ENCODE measurements at regions of chr7 and their contacts with region 1.

Region 1: DNA sequence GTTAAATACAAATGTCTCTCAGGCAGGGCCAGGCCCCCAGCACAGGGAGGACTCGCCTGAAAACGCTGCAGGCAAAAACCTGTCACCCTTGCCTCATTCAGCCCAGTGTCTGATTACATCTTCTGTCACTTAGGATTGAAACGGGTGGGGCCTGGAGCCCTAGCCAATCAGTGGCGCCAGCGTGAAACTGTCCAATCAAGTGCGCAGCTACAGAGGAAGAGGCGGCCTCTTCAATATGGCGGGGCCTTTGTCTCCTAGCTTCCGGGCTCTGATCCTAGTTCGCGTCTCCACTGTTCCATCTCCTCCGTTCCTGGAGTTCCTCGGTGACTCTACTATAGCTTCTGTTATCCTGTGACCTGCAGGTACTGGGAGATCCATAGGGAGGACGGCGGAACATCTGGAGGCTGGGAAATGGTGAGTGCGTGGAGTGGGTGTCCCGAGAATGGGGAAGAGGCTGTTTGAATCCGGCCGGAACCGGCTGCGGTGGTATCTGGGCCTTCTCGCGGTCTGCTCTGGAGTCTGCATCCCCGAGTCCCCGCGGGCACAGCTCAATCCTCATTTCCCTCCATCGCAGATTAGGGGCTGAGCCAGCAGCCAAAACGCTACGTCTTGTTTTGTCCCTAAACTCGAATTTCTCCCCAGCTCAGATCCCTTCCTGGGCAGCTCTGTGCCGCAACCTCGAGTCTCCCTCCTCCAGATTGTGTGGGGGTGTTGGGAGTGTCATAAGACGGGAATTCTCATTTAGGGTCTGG is at the start of gene ZNF736:
- DNase-seq: peak; percentile 95
- H3K4me3 ChIP-seq: peak within 1 kb of the TSS; percentile 54 to 79 (median 74)
- H3K27ac ChIP-seq: peak within 1 kb of the TSS; percentile 67 to 79 (median 72)
- H3K4me1 ChIP-seq: peaks cover 0 to 22% (median 17%) of the 10 kb centered on the region in 4 donors
- H3K27me3 ChIP-seq: no peaks in the 10 kb centered on the region
- CTCF ChIP-seq: no peak
- EP300 ChIP-seq: no peak
- POLR2A ChIP-seq: no peak
- total RNA-seq, gene ZNF736: 4.1 to 22.4 (median 7.5) TPM

Region 2: DNA sequence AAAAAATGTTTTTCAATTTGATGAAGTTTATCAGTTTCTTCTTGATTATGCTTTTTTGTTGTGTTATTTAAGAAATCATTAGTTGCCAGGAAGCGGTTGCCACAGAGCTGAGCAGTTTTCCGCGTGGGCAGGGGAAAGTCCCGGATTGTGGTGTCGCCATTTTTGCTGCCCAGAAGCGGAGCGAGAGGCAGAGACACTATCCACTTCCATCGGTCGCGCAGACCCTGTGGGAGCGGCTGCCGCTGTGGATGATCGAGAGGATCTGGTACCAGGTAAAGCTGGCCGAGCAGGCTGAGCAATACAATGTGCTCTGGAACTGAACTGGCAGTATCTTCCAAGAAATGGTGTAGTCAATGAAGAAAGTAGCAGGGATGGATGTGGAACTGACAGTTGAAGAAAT is 119.7 kb after region 1 on chr7:
- intact Hi-C with region 1: no loop called
- DNase-seq: no peak
- H3K4me3 ChIP-seq: no peak overlapping the region
- H3K27ac ChIP-seq: no peak overlapping the region
- H3K4me1 ChIP-seq: no peaks in the 10 kb centered on the region
- H3K27me3 ChIP-seq: no peaks in the 10 kb centered on the region
- CTCF ChIP-seq: no peak
- EP300 ChIP-seq: no peak
- POLR2A ChIP-seq: no peak

Region 3: GRCh38 chr7:64811767-64812166 is 497.9 kb after region 1 on chr7:
- intact Hi-C with region 1: no loop called
- DNase-seq: no peak
- H3K4me3 ChIP-seq: no peak overlapping the region
- H3K27ac ChIP-seq: no peak overlapping the region
- H3K4me1 ChIP-seq: no peaks in the 10 kb centered on the region
- H3K27me3 ChIP-seq: no peaks in the 10 kb centered on the region
- CTCF ChIP-seq: no peak
- EP300 ChIP-seq: no peak
- POLR2A ChIP-seq: no peak

Region 4: DNA sequence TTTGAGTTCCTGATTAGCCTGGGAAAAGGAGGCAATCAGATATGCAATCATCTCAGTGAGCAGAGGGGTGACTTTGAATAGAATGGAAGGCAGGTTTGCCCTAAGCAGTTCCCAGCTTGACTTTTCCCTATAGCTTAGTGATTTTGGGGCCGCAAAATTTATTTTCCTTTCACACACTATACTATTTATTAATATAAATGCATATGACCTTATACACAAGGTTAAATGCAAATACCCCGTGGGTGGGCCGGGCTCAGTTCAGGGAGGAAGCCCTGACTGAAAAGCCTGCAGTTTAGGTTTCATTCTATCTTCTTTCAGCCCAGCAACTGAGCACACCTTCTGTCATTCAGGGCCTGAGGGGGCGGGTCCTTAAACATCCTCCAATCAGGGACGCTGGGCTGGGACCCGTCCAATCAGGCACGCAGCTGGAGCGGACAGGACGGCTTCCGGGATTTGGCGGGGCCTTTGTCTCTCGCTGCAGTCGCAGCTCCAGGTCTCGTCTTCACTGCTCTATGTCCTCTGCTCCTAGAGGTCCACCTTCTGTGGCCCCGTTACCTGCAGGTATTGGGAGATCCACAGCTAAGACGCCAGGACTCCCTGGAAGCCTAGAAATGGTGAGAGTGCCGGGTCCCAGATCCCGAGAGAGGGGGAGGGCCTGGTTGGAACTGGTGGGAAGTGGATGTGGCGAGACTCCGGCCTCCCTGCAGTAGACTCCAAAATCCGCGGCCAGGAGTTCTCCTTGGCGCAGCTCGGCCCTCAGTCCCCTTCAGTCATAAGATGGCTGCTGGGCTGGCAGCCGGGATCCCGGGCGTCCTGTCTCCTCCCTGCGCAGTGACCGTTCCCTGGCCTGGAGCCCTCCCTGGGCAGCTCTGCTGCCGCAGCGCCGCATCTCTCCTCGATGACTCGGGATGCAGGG is 589.1 kb after region 1 on chr7 and contains the start of gene ZNF273:
- intact Hi-C with region 1: loop called (anchors 10 kb)
- DNase-seq: peak; percentile 97
- H3K4me3 ChIP-seq: peak within 1 kb of the TSS; percentile 61 to 76 (median 70)
- H3K27ac ChIP-seq: peak within 1 kb of the TSS; percentile 72 to 82 (median 79)
- H3K4me1 ChIP-seq: peaks cover 0 to 15% (median 11%) of the 10 kb centered on the region in 4 donors
- H3K27me3 ChIP-seq: no peaks in the 10 kb centered on the region
- CTCF ChIP-seq: no peak
- EP300 ChIP-seq: no peak
- POLR2A ChIP-seq: peak in 1 of 2 donors; percentile 38
- total RNA-seq, gene ZNF273: 7.5 to 38.2 (median 9.6) TPM